ENCODE measurements at regions of chr15 and their contacts with region 1.

Region 1: GRCh38 chr15:57527382-57528091 is 64.2 kb upstream of the MYZAP start:
- DNase-seq: peak; percentile 86
- H3K4me3 ChIP-seq: no peak overlapping the region
- H3K27ac ChIP-seq: no peak overlapping the region
- H3K4me1 ChIP-seq: peaks cover 35% of the 10 kb centered on the region
- H3K27me3 ChIP-seq: no peaks in the 10 kb centered on the region
- CTCF ChIP-seq: peak; percentile 41
- POLR2A ChIP-seq: no peak

Region 2: DNA sequence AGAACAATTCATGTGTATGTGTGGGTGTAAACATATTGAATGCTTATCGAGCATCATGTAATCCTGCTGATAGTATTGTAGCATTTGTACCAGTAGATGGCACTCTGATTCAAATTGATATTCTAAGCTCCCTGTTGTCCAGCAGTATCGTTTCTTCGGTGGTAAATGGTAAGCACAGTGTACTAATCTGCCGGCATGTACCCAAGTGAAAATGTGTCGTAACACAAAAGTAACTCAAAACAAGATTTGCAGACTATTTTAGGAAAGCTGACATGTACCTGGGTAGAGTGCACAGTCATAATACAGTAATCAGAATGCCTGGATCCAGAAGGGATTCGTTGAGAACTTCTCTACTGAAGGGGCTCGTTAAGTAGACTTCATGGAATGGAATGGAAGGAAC is 1030.9 kb before region 1 on chr15:
- CTCF ChIA-PET with region 1: interaction called, 13 read pairs
- POLR2A ChIA-PET with region 1: no interaction called
- dilution Hi-C with region 1: no loop called
- intact Hi-C with region 1: no loop called
- DNase-seq: peak; percentile 78
- H3K4me3 ChIP-seq: no peak overlapping the region
- H3K27ac ChIP-seq: no peak overlapping the region
- H3K4me1 ChIP-seq: no peaks in the 10 kb centered on the region
- H3K27me3 ChIP-seq: peaks cover 7 to 19% of the 10 kb centered on the region in 2 experiments
- CTCF ChIP-seq: peak; percentile 43 to 47
- POLR2A ChIP-seq: no peak

Region 3: DNA sequence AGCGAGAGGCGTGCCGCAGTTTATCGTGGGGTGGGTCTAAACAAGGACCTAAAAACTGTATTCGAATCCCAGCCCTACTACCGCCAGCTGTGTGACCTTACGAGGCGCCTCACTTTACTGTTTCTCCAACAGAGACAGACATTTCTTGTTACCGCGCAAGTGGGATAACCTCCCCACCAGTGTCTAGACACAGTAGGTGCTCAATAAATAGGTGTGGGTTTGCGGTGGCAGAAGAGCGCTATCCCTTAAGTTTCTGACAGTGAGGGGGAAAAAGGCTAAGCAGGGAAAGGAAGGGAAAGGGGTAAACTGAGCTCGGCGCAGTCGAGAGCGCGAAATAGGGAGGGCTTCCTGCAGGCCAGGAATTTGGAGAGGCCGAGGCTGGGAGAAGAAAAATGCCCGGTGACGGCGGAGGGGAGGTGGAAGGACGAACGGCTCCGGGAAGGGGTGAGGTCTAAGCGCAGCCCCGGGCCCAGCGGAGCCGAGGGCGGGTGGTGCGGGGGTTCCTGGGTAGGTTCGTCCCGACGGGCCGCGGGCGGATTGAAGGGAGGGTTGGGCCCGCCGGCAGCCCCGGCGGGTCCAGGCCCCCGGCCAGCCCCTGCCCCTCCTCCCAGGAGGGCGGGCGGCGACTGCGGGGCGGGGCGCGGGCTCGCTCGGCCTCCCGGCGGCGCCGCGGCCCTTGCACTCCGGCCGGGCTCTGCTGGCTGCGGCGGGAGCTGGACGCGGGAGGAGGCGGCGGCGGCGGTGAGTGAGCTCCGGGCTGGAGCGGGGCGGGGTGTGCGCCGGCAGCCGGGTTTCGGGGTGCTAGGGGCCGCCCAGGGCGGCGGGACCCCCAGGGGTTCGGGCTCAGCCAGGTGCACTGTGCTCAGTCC is 151.5 kb before region 1 on chr15 and contains the start of gene CGNL1:
- CTCF ChIA-PET with region 1: interaction called, 21 read pairs
- POLR2A ChIA-PET with region 1: no interaction called
- dilution Hi-C with region 1: no loop called
- intact Hi-C with region 1: no loop called
- DNase-seq: peak; percentile 49
- H3K4me3 ChIP-seq: peak within 1 kb of the TSS; percentile 15 to 87 (median 53)
- H3K27ac ChIP-seq: peak within 1 kb of the TSS; percentile 2
- H3K4me1 ChIP-seq: peaks cover 25% of the 10 kb centered on the region
- H3K27me3 ChIP-seq: peaks cover 0 to 3% of the 10 kb centered on the region in 2 experiments
- CTCF ChIP-seq: no peak
- POLR2A ChIP-seq: peak; percentile 66
- total RNA-seq, gene CGNL1: 25.7 and 27.1 TPM in 2 replicates

Region 4: GRCh38 chr15:57462381-57462780 is 65.2 kb before region 1 on chr15:
- CTCF ChIA-PET with region 1: interaction called, 12 read pairs
- POLR2A ChIA-PET with region 1: no interaction called
- dilution Hi-C with region 1: no loop called
- intact Hi-C with region 1: loop called (anchors 2 kb)
- DNase-seq: peak; percentile 52
- H3K4me3 ChIP-seq: no peak overlapping the region
- H3K27ac ChIP-seq: no peak overlapping the region
- H3K4me1 ChIP-seq: peaks cover 29% of the 10 kb centered on the region
- H3K27me3 ChIP-seq: no peaks in the 10 kb centered on the region
- CTCF ChIP-seq: no peak
- POLR2A ChIP-seq: no peak

Region 5: DNA sequence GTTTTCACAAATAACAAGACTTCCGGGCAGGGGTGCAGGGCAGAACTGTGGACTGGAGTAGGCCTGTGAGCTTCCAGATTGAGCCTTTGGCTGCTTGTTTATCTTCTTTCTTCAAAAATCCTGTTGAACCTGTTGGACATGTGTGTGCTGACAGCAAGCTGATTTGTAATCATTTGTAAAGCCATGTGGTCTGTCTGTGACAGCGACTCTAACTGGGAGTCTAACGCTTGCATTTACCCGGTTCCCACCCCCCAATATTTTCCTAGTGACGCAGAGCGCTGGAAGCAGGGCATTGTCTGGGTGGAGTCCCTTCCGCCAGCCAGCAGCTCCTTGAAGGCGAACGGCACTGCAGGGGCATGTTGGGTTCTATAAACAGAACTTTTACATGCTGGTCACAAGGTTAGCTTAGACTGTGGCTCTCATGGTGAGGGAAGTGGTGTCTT is 21.6 kb before region 1 on chr15:
- CTCF ChIA-PET with region 1: interaction called, 30 read pairs
- POLR2A ChIA-PET with region 1: no interaction called
- dilution Hi-C with region 1: no loop called
- intact Hi-C with region 1: loop called (anchors 2 kb)
- DNase-seq: peak; percentile 92
- H3K4me3 ChIP-seq: no peak overlapping the region
- H3K27ac ChIP-seq: peak overlapping the region; percentile 83
- H3K4me1 ChIP-seq: peaks cover 36% of the 10 kb centered on the region
- H3K27me3 ChIP-seq: no peaks in the 10 kb centered on the region
- CTCF ChIP-seq: no peak
- POLR2A ChIP-seq: peak; percentile 18

Region 6: GRCh38 chr15:57551717-57552677 is 24.5 kb after region 1 on chr15:
- CTCF ChIA-PET with region 1: interaction called, 154 read pairs
- POLR2A ChIA-PET with region 1: interaction called, 3 read pairs
- dilution Hi-C with region 1: no loop called
- intact Hi-C with region 1: no loop called
- DNase-seq: peak; percentile 88
- H3K4me3 ChIP-seq: peak overlapping the region in 1 of 3 experiments; percentile 0
- H3K27ac ChIP-seq: peak overlapping the region; percentile 94
- H3K4me1 ChIP-seq: peaks cover 61% of the 10 kb centered on the region
- H3K27me3 ChIP-seq: no peaks in the 10 kb centered on the region
- CTCF ChIP-seq: no peak
- POLR2A ChIP-seq: peak; percentile 11